Calu3 (cell line): ENCODE measurements at regions of chr19 and their contacts with region 1.

Region 1: DNA sequence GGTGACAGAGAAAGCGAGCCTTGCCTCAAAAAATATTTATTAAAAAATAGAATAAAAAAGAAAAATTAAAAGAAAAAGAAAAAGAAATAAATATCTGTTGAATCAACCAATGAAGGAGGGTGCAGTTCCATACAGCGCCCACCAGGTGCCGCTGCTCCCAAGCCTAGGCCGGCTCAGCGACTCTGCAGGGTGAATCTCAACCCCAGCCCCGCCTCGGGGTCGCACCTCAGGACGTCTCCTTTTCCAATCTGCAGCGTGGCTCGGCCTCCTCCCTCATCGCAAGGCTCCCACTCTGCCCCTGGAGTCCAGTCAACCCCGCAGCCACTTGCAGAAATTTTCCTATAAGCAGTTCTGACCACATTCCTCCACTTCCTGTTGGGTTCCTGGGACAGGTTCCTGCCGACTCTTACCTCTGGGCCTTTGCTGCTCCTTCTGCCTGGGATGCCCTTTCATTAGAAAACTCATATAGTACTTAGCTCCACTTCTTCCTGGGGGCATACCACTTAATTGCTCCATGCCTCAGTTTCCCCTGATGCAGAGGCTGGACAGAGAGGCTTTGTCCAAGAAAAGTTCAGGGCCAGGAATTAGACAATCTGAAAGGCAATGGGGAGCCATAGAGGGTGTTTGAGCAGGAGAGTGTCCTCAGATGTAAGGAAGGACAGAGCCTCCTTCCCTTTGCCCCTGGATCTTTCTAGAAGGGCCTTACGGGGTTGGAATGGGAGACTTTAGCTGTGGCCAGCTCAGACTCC is 24.3 kb downstream of the NFILZ start:
- DNase-seq: peak; percentile 60
- H3K4me3 Mint-ChIP-seq: no peak overlapping the region
- H3K27ac Mint-ChIP-seq: no peak overlapping the region
- H3K4me1 Mint-ChIP-seq: peaks cover 8% of the 10 kb centered on the region
- H3K27me3 Mint-ChIP-seq: peaks cover 66% of the 10 kb centered on the region
- CTCF ChIP-seq: peak; percentile 76

Region 2: DNA sequence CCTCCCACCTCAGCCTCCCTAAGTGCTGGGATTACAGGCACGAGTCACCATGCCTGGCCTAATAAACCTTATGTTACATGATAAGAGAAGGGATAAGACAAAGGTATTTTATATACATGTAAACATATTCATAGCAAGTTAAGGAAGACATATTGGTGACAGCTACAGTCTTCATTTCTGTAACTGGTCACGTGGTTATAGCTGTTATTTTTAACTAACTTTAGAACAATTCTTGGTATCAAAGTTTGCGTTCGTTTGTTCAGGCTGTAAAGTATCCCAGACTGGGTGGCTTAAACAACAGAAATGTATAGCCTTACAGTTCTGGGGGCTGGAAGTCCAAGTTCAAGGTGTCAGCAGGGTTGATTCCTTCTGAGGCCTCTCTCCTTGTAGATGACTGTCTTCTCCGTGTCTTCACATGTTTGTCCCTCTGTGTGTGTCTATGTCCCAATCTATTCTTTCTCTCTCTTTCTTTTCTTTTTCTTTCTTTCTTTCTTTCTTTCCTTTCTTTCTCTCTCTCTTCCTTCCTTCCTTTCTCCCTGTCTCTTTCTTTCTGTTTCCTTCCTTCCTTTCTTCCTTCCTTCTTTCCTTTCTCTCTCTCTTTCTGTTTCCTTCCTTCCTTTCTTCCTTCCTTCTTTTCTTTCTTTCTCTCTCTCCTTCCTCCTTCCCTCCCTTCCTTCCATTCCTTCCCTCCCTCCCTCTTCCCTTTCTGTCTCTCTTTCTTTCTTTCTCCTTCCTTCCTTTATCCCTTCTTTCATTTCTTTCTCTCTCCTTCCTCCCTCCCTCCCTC is 36.2 kb after region 1 on chr19:
- CTCF ChIA-PET with region 1: no interaction called
- intact Hi-C with region 1: loop called (anchors 5 kb)
- DNase-seq: no peak
- H3K4me3 Mint-ChIP-seq: no peak overlapping the region
- H3K27ac Mint-ChIP-seq: no peak overlapping the region
- H3K4me1 Mint-ChIP-seq: no peaks in the 10 kb centered on the region
- H3K27me3 Mint-ChIP-seq: peaks cover 27% of the 10 kb centered on the region
- CTCF ChIP-seq: no peak

Region 3: GRCh38 chr19:8832132-8833021 is 177.6 kb after region 1 on chr19 and contains the starts of genes MBD3L1 and ZNF558:
- CTCF ChIA-PET with region 1: no interaction called
- intact Hi-C with region 1: loop called (anchors 10 kb)
- DNase-seq: peak; percentile 96
- H3K4me3 Mint-ChIP-seq: peak within 1 kb of the TSS; percentile 80
- H3K27ac Mint-ChIP-seq: peak within 1 kb of the TSS; percentile 70
- H3K4me1 Mint-ChIP-seq: no peaks in the 10 kb centered on the region
- H3K27me3 Mint-ChIP-seq: no peaks in the 10 kb centered on the region
- CTCF ChIP-seq: no peak
- total RNA-seq, gene MBD3L1: not detected in 2 replicates
- total RNA-seq, gene ZNF558: 12.3 and 13.2 TPM in 2 replicates